ENCODE measurements at regions of chr2 and their contacts with region 1.

Region 1: DNA sequence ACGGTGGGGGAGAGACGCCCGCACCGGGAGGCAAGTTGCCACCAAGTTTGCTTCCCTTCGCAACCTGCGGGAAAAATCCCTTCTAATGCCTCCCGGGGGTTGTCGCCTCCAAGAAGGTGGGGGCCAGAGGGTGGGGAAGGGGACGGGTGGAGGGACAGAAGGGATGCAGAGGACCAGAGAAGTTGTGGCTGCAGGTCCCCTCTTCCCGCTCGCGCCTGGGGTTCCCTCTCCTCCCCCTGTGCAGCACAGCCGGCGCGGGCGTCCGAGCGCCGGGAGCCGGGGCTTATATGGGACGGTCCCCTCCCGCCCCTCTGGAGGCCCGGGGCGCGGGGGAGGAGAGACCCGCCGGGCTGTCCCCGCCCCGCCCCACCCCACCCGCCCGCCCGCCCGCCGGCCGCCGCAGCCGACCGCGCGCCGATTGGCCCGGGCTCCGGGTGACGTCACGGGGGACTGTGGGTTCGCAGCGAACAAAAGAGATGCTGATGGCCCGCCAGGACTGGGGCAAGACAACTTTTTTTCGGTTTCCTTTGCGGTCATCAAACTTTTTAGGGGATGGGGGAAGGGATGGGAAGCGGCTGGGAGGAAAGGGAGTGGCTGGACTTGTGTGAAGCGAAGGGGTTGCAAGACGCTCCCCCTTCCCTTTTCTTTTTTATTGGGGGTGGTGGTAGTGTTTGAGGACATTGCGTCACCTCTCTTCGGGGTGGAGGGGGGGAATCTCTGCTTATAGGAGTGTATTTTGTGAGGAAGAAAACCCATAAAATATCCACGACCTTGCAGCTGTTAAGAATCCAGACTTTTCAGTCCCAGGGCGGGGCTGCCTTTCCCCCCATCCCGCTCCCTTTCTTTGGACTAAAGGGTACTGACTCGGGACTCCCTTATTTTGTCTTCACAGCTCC is at the start of gene FN1:
- DNase-seq: peak; percentile 95
- H3K4me3 ChIP-seq: peak within 1 kb of the TSS; percentile 91
- CTCF ChIP-seq: no peak

Region 2: DNA sequence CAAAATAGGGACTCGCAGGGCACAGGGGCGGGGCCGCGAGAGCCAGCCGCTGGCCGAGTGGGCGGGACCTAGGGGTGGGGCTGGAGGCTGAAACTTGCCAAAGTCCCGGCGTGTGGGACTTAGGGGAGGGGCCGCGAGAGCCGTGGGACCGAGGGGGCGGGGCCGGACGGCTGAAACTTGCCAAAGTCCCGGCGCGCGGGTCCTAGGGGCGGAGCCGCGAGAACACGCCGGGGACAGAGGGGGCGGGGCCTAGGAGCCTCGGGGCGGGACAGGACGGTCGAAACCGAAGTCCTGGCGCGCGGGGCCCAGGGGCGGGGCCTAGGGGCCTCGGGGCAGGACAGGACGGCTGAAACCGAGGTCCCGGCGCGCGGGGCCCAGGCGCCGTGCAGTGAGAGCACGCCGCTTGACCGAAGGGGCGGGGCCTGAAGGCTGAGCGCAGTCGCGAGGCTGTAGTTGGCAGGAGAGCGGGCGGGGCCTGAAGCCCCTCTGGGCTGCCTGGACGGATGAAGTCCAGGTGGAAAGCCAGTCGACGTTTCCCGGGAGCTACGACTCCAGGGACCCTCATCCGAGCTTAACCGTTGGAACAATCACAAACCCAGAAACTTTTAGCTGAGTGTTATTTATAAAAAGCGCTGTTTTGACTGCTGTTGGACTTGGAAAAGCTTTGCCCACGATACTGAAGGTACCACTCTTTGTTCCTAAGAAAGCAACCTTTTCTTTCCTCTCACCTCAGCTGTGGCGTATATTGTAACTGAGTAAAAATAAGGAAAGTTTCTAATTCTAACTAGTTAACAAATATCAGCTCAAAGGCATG is 626.1 kb before region 1 on chr2:
- CTCF ChIA-PET with region 1: no interaction called
- POLR2A ChIA-PET with region 1: no interaction called
- DNase-seq: peak; percentile 87
- H3K4me3 ChIP-seq: peak overlapping the region; percentile 87
- CTCF ChIP-seq: no peak

Region 3: DNA sequence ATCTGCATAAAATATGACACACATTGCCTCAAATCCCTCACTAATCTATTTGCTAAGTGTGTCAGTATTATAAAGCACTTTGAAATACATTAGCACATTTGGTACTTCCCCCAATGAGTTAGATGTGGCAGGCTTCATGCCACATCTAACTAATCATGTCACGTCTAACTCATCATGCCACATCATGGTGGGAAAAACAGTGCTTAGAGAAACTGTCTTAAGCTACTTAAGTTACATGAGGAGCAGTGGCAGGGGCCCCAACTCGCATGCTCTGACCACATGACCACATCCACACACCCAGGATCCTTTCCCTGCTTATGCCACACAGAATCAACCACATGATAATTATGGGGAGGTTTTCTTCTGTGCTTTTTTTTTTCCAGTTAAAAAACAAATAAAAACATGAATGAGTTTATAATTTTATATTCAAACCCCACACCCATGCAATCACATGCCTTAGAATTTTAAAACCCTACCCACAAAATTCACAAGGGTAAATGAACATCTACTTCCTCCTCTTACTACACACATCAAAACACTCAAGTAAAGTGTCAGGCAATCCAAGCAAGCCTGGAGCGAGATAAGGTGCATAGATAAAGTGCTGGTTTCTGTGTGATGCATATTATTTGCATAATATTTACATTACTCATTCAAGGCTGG is 299.3 kb before region 1 on chr2:
- CTCF ChIA-PET with region 1: no interaction called
- POLR2A ChIA-PET with region 1: no interaction called
- DNase-seq: no peak
- H3K4me3 ChIP-seq: no peak overlapping the region
- CTCF ChIP-seq: no peak

Region 4: GRCh38 chr2:215454519-215455246 is 18.6 kb after region 1 on chr2:
- CTCF ChIA-PET with region 1: interaction called, 72 read pairs
- POLR2A ChIA-PET with region 1: no interaction called
- DNase-seq: no peak
- H3K4me3 ChIP-seq: no peak overlapping the region
- CTCF ChIP-seq: peak; percentile 55

Region 5: GRCh38 chr2:215460682-215461382 is 24.8 kb after region 1 on chr2:
- CTCF ChIA-PET with region 1: interaction called, 72 read pairs
- POLR2A ChIA-PET with region 1: interaction called, 11 read pairs
- DNase-seq: peak; percentile 88
- H3K4me3 ChIP-seq: no peak overlapping the region
- CTCF ChIP-seq: no peak

Region 6: GRCh38 chr2:215528555-215528954 is 92.5 kb after region 1 on chr2:
- CTCF ChIA-PET with region 1: interaction called, 3 read pairs
- POLR2A ChIA-PET with region 1: interaction called, 32 read pairs
- DNase-seq: peak; percentile 98
- H3K4me3 ChIP-seq: no peak overlapping the region
- CTCF ChIP-seq: no peak

Region 7: GRCh38 chr2:215693193-215693998 is 257.3 kb after region 1 on chr2:
- CTCF ChIA-PET with region 1: no interaction called
- POLR2A ChIA-PET with region 1: interaction called, 12 read pairs
- DNase-seq: peak; percentile 80
- H3K4me3 ChIP-seq: no peak overlapping the region
- CTCF ChIP-seq: no peak

Region 8: DNA sequence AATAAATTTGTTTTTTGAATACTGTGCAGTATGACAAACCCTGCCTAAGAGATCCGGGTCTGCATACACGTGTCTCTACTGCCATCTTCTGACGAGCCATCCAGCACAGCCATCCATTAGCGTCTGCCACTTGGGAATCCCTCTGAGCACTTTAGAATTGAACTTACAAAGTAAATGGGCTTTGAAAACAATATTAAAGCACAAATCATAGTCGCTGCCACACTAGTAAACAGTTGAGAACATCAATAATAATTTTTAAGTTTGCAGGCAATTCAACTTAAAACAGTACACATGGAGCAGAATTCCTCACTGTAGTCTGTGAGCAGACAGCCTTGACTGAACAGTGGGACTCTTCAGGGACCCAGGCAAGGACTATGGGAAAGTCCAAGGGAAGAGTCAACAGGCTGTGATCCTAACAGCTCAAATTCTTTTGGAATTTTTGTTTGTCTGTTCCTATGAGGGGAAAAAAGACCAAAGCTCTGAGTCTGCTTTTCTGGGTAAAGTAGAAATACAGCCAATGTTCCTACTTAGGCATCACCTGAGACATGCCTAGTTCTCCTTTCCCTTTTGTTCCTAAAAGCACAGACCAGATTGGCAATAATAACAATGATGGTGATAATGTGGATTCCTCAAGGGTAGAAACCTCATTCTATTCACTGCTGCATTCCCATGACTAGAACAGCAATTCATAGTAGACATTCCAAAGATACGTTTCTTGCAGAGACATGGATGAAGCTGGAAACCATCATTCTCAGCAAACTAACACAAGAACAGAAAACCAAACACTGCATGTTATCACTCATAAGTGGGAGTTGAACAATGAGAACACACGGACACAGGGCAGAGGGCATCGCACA is 484.4 kb after region 1 on chr2:
- CTCF ChIA-PET with region 1: interaction called, 21 read pairs
- POLR2A ChIA-PET with region 1: interaction called, 9 read pairs
- DNase-seq: peak; percentile 47
- H3K4me3 ChIP-seq: no peak overlapping the region
- CTCF ChIP-seq: peak; percentile 75